CD4-positive, alpha-beta memory T cell (primary cell): ENCODE measurements at regions of chr12 and their contacts with region 1.

Region 1: GRCh38 chr12:95003213-95003920 is at the start of gene NDUFA12:
- DNase-seq: peak; percentile 92 to 94 (median 93)
- H3K4me3 ChIP-seq: peak within 1 kb of the TSS; percentile 83 to 96
- H3K4me3 Mint-ChIP-seq: peak within 1 kb of the TSS; percentile 93 to 99 (median 95)
- H3K27ac ChIP-seq: peak within 1 kb of the TSS; percentile 80
- H3K27ac Mint-ChIP-seq: peak within 1 kb of the TSS; percentile 92 to 97 (median 96)
- H3K4me1 ChIP-seq: peaks cover 61% of the 10 kb centered on the region
- H3K4me1 Mint-ChIP-seq: peaks cover 32 to 55% (median 42%) of the 10 kb centered on the region in 4 donors
- H3K27me3 ChIP-seq: no peaks in the 10 kb centered on the region
- H3K27me3 Mint-ChIP-seq: no peaks in the 10 kb centered on the region
- total RNA-seq, gene NDUFA12: 55.5 to 61.5 TPM

Region 2: DNA sequence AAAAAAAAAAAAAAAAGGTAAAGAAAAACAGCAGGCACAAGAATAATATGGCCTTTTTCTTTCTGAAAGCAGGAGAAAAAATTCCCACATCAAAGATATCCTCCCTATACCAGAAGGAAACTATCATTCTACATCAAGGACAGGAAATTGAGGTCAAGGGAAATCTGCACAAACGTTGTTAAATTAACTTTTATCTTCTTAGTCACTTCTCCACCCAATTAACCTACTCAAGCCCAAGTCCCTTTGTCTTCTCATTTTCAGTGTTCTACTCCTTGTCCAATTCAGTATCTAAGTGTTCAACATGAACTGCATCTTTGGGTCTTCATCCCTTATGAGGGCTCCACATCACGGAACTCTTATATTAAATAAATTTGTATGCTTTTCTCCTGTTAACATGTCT is 15.6 kb before region 1 on chr12:
- CTCF ChIA-PET with region 1: interaction called, 21 read pairs
- POLR2A ChIA-PET with region 1: interaction called, 116 read pairs
- intact Hi-C with region 1: loop called (anchors 2 kb)
- DNase-seq: peak in 4 of 5 donors; percentile 49 to 64 (median 60)
- H3K4me3 ChIP-seq: no peak overlapping the region
- H3K4me3 Mint-ChIP-seq: peak overlapping the region; percentile 16 to 80 (median 72)
- H3K27ac ChIP-seq: peak overlapping the region; percentile 35
- H3K27ac Mint-ChIP-seq: peak overlapping the region; percentile 73 to 95 (median 92)
- H3K4me1 ChIP-seq: peaks cover 65% of the 10 kb centered on the region
- H3K4me1 Mint-ChIP-seq: peaks cover 43 to 69% (median 57%) of the 10 kb centered on the region in 4 donors
- H3K27me3 ChIP-seq: no peaks in the 10 kb centered on the region
- H3K27me3 Mint-ChIP-seq: no peaks in the 10 kb centered on the region

Region 3: GRCh38 chr12:95014554-95014953 is 11.2 kb after region 1 on chr12:
- CTCF ChIA-PET with region 1: interaction called, 7 read pairs
- POLR2A ChIA-PET with region 1: interaction called, 17 read pairs
- intact Hi-C with region 1: no loop called
- DNase-seq: no peak
- H3K4me3 ChIP-seq: no peak overlapping the region
- H3K4me3 Mint-ChIP-seq: no peak overlapping the region
- H3K27ac ChIP-seq: no peak overlapping the region
- H3K27ac Mint-ChIP-seq: peak overlapping the region in 1 of 7 donors; percentile 68
- H3K4me1 ChIP-seq: no peaks in the 10 kb centered on the region
- H3K4me1 Mint-ChIP-seq: no peaks in the 10 kb centered on the region
- H3K27me3 ChIP-seq: no peaks in the 10 kb centered on the region
- H3K27me3 Mint-ChIP-seq: no peaks in the 10 kb centered on the region